AG04450 (cell line): ENCODE measurements at regions of chr7 and their contacts with region 1.

Region 1: DNA sequence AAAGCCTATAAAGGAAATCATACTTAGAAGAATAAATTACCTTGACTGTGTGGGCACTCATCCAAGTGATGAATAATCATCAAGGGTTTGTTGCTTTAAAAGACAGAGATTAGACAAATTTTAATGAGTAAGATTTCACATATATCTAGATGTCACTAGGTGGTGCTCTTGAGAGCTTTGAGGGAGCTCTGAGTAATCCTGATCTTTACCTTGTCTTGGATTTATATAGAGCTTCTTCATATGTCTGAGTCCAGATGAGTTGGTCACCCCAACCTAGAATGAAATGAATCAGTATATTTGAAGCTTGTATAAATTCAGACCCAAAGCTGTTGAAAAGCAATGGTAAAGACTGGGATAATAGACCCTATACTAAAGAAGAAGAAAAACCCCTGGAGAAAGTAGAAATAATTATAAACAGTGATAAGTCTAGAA is 3.7 kb downstream of the AGR2 start:
- DNase-seq: peak; percentile 34
- H3K4me3 ChIP-seq: no peak overlapping the region
- H3K27ac ChIP-seq: no peak overlapping the region
- H3K27me3 ChIP-seq: no peaks in the 10 kb centered on the region
- CTCF ChIP-seq: peak; percentile 69

Region 2: DNA sequence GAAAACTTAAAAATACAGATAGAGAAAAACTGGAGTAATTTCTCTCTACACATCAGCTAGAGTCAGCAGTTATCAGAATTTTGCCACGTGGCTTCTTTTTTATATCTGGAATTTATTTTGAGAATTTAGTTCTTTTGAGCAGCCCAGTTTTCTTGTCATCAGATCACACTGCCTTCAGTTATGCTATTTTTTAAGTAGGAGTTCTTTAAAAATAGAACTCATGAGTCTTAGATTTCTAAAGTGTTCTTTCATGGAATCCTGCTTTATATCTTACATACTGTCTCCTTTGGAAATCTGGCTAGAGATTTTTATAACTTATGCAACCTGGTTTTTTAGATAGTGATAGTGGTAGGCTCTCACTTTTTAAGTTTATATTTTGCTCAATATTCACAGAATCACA is 20.5 kb before region 1 on chr7:
- CTCF ChIA-PET with region 1: interaction called, 14 read pairs
- POLR2A ChIA-PET with region 1: no interaction called
- DNase-seq: no peak
- H3K4me3 ChIP-seq: no peak overlapping the region
- H3K27ac ChIP-seq: no peak overlapping the region
- H3K27me3 ChIP-seq: no peaks in the 10 kb centered on the region
- CTCF ChIP-seq: no peak

Region 3: DNA sequence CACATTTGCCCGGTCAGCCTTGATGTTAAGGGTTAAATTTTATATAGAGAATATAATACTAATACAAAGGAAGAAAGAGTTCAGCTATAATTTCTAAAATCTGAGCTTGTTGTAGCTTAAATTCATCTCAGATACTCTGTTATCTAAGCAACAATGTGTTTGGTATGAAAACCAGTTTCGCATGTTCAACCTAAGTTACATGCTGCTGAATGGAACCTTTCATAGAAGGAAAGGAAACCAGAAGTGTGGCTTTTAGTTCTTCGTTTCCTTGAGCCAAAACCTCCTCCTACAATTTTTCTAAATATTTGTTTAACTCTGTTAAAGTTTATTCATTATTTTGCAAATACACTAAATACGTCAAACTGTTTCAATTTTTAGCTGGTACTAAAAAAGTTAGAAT is 14.9 kb before region 1 on chr7:
- CTCF ChIA-PET with region 1: interaction called, 14 read pairs
- POLR2A ChIA-PET with region 1: no interaction called
- DNase-seq: no peak
- H3K4me3 ChIP-seq: no peak overlapping the region
- H3K27ac ChIP-seq: no peak overlapping the region
- H3K27me3 ChIP-seq: no peaks in the 10 kb centered on the region
- CTCF ChIP-seq: no peak

Region 4: DNA sequence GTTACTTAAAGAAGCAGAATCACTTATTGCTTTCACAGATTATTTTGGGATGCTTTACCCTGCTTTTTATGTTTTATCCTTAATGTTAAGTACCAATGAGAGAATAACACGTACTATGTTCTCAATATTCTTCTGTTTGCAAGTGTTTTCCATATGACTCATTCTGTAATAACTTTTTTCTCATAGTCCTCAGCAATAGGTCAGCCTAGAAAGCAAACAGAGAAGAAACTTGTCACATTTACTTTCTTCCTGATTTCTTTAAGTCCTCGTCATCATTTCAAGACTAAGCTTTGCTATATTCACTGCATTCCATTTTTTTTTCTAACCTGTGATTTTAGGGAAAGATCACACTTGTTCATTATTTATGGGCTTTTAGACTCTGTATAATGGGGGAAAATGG is 10.4 kb after region 1 on chr7:
- CTCF ChIA-PET with region 1: interaction called, 20 read pairs
- POLR2A ChIA-PET with region 1: no interaction called
- DNase-seq: no peak
- H3K4me3 ChIP-seq: no peak overlapping the region
- H3K27ac ChIP-seq: no peak overlapping the region
- H3K27me3 ChIP-seq: no peaks in the 10 kb centered on the region
- CTCF ChIP-seq: no peak